ENCODE measurements at regions of chr12 and their contacts with region 1.

Region 1: GRCh38 chr12:120649442-120650232 is 9.2 kb downstream of the CABP1 start:
- DNase-seq: no peak
- H3K4me3 ChIP-seq: peak overlapping the region in 1 of 2 donors; percentile 23
- H3K27ac ChIP-seq: peak overlapping the region in 1 of 2 donors; percentile 22
- H3K4me1 ChIP-seq: no peaks in the 10 kb centered on the region
- H3K27me3 ChIP-seq: no peaks in the 10 kb centered on the region
- CTCF ChIP-seq: no peak
- POLR2A ChIP-seq: no peak

Region 2: DNA sequence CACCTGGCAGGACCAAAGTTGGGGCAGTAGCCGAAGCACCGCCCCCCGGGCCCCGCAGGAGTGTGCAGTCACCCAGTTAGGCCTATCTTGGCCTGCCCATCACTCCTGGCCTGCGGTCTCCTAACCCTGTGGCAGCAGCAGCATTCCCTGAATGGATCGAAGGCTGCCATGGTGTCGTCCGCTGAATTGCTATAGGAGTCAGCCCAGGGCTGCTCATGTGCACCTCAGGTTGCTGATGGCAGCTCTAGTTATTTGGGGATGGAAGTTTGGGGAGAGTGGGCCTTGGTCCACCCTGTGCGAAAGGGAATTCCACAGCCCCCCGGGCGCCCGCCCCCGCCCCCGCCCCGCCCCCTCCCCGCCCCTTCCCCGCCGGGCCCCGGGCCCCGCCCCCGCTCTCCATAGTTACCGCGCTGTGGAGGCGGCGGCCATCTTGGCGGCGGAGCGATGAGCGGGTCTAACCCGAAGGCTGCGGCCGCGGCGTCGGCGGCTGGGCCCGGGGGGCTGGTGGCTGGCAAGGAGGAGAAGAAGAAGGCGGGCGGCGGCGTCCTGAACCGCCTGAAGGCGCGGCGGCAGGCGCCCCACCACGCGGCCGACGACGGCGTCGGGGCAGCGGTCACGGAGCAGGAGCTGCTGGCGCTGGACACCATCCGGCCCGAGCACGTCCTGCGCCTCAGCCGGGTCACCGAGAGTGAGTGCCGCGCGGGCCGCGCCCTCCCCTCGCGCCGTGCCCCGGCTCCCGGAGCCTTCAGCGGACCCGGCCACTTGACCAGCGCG is 60.6 kb after region 1 on chr12 and contains the start of gene UNC119B:
- intact Hi-C with region 1: loop called (anchors 2 kb)
- DNase-seq: peak; percentile 62
- H3K4me3 ChIP-seq: peak within 1 kb of the TSS; percentile 94 to 97
- H3K27ac ChIP-seq: peak within 1 kb of the TSS; percentile 92 to 94
- H3K4me1 ChIP-seq: no peaks in the 10 kb centered on the region
- H3K27me3 ChIP-seq: no peaks in the 10 kb centered on the region
- CTCF ChIP-seq: no peak
- POLR2A ChIP-seq: peak; percentile 41
- total RNA-seq, gene UNC119B: 26.0 to 41.9 TPM

Region 3: DNA sequence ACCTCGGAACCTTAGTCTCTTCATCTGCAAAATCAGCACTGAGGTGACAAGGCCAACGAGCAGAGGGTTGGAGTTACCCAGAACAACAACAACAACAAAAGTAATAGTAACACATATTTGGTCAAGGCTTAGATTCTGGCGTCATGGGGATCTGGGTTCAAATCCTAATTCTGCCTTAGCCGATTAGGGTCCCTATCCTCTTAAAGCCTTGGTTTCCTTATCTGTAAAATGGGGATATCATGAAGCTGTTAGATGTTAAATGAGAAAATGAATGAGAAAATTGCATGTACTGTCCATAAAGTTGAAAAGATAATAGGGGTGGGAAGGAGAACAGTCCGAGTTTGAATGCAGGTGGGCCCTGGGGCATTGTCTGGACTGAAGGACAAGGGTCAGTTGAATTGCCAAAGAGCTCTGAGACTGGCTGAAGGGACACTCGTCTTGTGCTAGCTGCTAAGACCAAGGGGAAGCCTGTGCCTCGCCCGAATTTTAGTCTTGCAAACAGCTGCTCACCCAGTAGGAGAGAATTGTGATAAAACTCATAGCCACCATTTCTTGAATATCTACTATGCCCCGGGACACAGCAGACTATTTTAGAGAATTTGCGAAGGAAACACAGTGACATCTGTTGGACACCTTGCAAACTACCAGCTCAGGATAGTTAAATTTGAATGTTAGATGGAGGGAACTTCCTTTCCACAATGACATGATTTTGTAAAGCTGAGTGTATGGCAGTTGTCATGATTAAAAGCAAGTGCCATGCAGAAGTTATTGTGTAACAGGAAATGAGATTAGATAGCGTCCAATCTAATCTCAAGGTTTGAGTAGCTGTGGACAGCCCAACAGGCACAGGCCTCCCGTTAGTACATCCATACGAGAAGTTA is 321.9 kb after region 1 on chr12:
- intact Hi-C with region 1: loop called (anchors 5 kb)
- DNase-seq: peak; percentile 28
- H3K4me3 ChIP-seq: no peak overlapping the region
- H3K27ac ChIP-seq: no peak overlapping the region
- H3K4me1 ChIP-seq: no peaks in the 10 kb centered on the region
- H3K27me3 ChIP-seq: no peaks in the 10 kb centered on the region
- CTCF ChIP-seq: peak; percentile 19 to 78 (median 62)
- POLR2A ChIP-seq: no peak

Measured in prostate gland (tissue), 2 donors.